ENCODE measurements at regions of chr2 and their contacts with region 1.

Region 1: GRCh38 chr2:157336137-157337010 is 10.8 kb upstream of the ERMN start:
- DNase-seq: peak in 10 of 14 experiments; percentile 12 to 76 (median 28)
- ATAC-seq: no peak
- H3K4me3 ChIP-seq: peak overlapping the region; percentile 6
- H3K4me3 Mint-ChIP-seq: peak overlapping the region; percentile 79
- H3K27ac ChIP-seq: no peak overlapping the region
- H3K27ac Mint-ChIP-seq: peak overlapping the region; percentile 83
- H3K4me1 ChIP-seq: peaks cover 30% of the 10 kb centered on the region
- H3K4me1 Mint-ChIP-seq: peaks cover 88% of the 10 kb centered on the region
- H3K27me3 ChIP-seq: no peaks in the 10 kb centered on the region
- H3K27me3 Mint-ChIP-seq: no peaks in the 10 kb centered on the region
- CTCF ChIP-seq: peak; percentile 82

Region 2: DNA sequence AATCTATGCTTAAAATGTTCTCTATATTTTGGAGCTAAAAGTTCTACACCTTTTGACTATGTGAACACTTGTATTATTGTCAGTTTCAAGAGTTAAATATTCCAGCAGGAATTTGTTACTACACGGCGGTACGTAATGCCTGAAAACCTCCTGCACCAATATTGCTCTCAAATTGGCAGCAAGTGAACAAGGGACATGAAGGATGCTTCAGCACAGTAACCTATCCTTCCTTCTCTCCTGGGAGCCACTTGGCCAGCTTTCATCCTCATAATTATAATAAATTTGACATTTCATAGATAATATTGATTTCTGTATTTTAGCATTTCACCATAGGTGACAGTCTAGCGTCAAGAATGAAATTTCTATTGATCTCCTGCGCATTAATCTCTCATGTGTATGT is 1201.5 kb before region 1 on chr2:
- CTCF ChIA-PET with region 1: no interaction called
- POLR2A ChIA-PET with region 1: no interaction called
- intact Hi-C with region 1: no loop called
- DNase-seq: no peak
- ATAC-seq: no peak
- H3K4me3 ChIP-seq: no peak overlapping the region
- H3K4me3 Mint-ChIP-seq: no peak overlapping the region
- H3K27ac ChIP-seq: no peak overlapping the region
- H3K27ac Mint-ChIP-seq: no peak overlapping the region
- H3K4me1 ChIP-seq: no peaks in the 10 kb centered on the region
- H3K4me1 Mint-ChIP-seq: no peaks in the 10 kb centered on the region
- H3K27me3 ChIP-seq: no peaks in the 10 kb centered on the region
- H3K27me3 Mint-ChIP-seq: peaks cover 5% of the 10 kb centered on the region
- CTCF ChIP-seq: no peak

Region 3: DNA sequence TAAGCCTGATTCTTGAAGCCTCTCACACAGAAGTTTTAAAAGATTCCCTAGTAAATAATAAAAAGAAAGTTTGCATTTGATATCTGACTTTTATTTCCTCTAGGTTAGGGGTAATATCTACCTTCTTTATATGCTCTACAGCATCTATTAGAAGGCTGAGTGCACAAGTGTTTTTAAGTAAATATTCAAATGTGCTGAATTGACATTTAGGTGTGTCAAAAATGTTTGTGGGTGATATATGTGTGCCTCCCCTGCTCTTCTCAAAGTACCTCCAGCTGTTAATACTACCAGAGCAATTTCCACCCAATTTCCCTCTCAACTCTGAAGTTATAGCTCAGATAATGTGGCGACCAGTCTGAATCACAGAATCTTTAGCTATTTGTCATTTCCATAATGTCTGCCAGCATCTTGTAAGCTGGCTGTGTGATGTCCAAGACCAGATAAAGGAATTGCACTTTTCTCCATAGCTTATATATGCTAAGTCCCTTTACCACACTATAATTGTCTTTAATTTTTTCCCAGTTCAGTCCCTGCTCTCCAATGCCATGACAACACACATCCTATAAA is 13.7 kb after region 1 on chr2:
- CTCF ChIA-PET with region 1: interaction called, 23 read pairs
- POLR2A ChIA-PET with region 1: interaction called, 8 read pairs
- intact Hi-C with region 1: no loop called
- DNase-seq: no peak
- ATAC-seq: no peak
- H3K4me3 ChIP-seq: no peak overlapping the region
- H3K4me3 Mint-ChIP-seq: no peak overlapping the region
- H3K27ac ChIP-seq: no peak overlapping the region
- H3K27ac Mint-ChIP-seq: no peak overlapping the region
- H3K4me1 ChIP-seq: no peaks in the 10 kb centered on the region
- H3K4me1 Mint-ChIP-seq: peaks cover 74% of the 10 kb centered on the region
- H3K27me3 ChIP-seq: no peaks in the 10 kb centered on the region
- H3K27me3 Mint-ChIP-seq: no peaks in the 10 kb centered on the region
- CTCF ChIP-seq: no peak

Region 4: DNA sequence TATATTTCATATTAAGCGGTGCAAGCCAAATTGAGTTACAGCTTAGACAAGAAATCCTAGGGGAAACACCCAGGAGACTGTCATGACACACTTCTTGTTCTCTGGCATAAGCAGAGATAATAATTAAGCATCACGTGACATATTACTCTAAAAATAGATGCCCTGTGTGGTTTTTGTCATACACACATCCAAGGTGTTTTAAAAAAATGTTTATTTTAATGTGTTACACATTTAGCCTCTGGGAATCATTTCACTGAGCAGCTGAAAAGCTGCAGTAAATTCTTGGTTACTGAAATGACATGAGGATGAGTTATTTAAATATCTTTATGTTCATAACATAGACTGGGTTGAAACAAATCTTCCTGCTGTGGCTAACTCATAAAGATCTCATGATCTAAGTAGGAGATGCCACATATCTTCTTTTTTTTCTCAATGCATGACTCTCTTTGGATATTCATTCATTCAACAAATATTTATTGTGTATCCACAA is 27.3 kb after region 1 on chr2:
- CTCF ChIA-PET with region 1: interaction called, 4 read pairs
- POLR2A ChIA-PET with region 1: interaction called, 3 read pairs
- intact Hi-C with region 1: loop called in 1 of 2 experiments (anchors 5 kb)
- DNase-seq: peak in 1 of 14 experiments; percentile 34
- ATAC-seq: no peak
- H3K4me3 ChIP-seq: no peak overlapping the region
- H3K4me3 Mint-ChIP-seq: no peak overlapping the region
- H3K27ac ChIP-seq: no peak overlapping the region
- H3K27ac Mint-ChIP-seq: no peak overlapping the region
- H3K4me1 ChIP-seq: peaks cover 3% of the 10 kb centered on the region
- H3K4me1 Mint-ChIP-seq: peaks cover 48% of the 10 kb centered on the region
- H3K27me3 ChIP-seq: no peaks in the 10 kb centered on the region
- H3K27me3 Mint-ChIP-seq: no peaks in the 10 kb centered on the region
- CTCF ChIP-seq: no peak

Region 5: GRCh38 chr2:157404363-157404762 is 68.0 kb after region 1 on chr2:
- CTCF ChIA-PET with region 1: no interaction called
- POLR2A ChIA-PET with region 1: interaction called, 92 read pairs
- intact Hi-C with region 1: no loop called
- DNase-seq: peak; percentile 53 to 93 (median 66)
- ATAC-seq: peak; percentile 91
- H3K4me3 ChIP-seq: no peak overlapping the region
- H3K4me3 Mint-ChIP-seq: peak overlapping the region; percentile 74
- H3K27ac ChIP-seq: peak overlapping the region; percentile 58 to 94
- H3K27ac Mint-ChIP-seq: peak overlapping the region; percentile 99
- H3K4me1 ChIP-seq: peaks cover 33% of the 10 kb centered on the region
- H3K4me1 Mint-ChIP-seq: peaks cover 82% of the 10 kb centered on the region
- H3K27me3 ChIP-seq: no peaks in the 10 kb centered on the region
- H3K27me3 Mint-ChIP-seq: no peaks in the 10 kb centered on the region
- CTCF ChIP-seq: no peak

Region 6: GRCh38 chr2:157413326-157414035 is 77.1 kb after region 1 on chr2:
- CTCF ChIA-PET with region 1: interaction called, 3 read pairs
- POLR2A ChIA-PET with region 1: interaction called, 23 read pairs
- intact Hi-C with region 1: no loop called
- DNase-seq: peak in 12 of 14 experiments; percentile 34 to 93 (median 54)
- ATAC-seq: peak; percentile 76
- H3K4me3 ChIP-seq: peak overlapping the region; percentile 6
- H3K4me3 Mint-ChIP-seq: peak overlapping the region; percentile 54
- H3K27ac ChIP-seq: peak overlapping the region; percentile 51 to 79
- H3K27ac Mint-ChIP-seq: peak overlapping the region; percentile 86
- H3K4me1 ChIP-seq: peaks cover 43% of the 10 kb centered on the region
- H3K4me1 Mint-ChIP-seq: peaks cover 92% of the 10 kb centered on the region
- H3K27me3 ChIP-seq: no peaks in the 10 kb centered on the region
- H3K27me3 Mint-ChIP-seq: no peaks in the 10 kb centered on the region
- CTCF ChIP-seq: no peak

Region 7: GRCh38 chr2:157420771-157421323 is 84.5 kb after region 1 on chr2:
- CTCF ChIA-PET with region 1: interaction called, 4 read pairs
- POLR2A ChIA-PET with region 1: interaction called, 19 read pairs
- intact Hi-C with region 1: no loop called
- DNase-seq: peak in 3 of 14 experiments; percentile 63 to 73 (median 70)
- ATAC-seq: peak; percentile 8
- H3K4me3 ChIP-seq: no peak overlapping the region
- H3K4me3 Mint-ChIP-seq: peak overlapping the region; percentile 72
- H3K27ac ChIP-seq: peak overlapping the region; percentile 69
- H3K27ac Mint-ChIP-seq: peak overlapping the region; percentile 96
- H3K4me1 ChIP-seq: peaks cover 49% of the 10 kb centered on the region
- H3K4me1 Mint-ChIP-seq: peaks cover 80% of the 10 kb centered on the region
- H3K27me3 ChIP-seq: no peaks in the 10 kb centered on the region
- H3K27me3 Mint-ChIP-seq: no peaks in the 10 kb centered on the region
- CTCF ChIP-seq: no peak

Region 8: DNA sequence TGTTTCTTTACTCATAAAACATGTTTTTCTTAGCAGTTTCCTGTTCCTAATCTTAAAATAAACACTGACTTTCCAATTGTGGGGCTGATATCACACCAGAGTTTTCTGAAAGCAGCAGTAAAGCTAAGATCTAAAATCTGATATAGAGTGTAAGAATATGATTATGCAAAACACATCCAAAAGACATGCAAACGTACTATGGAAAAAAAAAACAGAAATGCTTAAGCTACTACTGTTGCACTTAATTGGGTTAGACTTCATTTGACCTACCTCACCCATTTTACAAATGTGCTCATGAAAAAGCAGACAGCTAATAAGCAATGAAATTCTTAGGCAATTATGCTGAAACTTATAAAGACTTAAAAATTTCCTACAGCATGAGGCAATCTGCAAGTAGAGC is 97.0 kb after region 1 on chr2:
- CTCF ChIA-PET with region 1: interaction called, 3 read pairs
- POLR2A ChIA-PET with region 1: interaction called, 36 read pairs
- intact Hi-C with region 1: loop called in 1 of 2 experiments (anchors 10 kb)
- DNase-seq: no peak
- ATAC-seq: peak; percentile 25
- H3K4me3 ChIP-seq: peak overlapping the region; percentile 72
- H3K4me3 Mint-ChIP-seq: peak overlapping the region; percentile 95
- H3K27ac ChIP-seq: peak overlapping the region; percentile 13 to 97
- H3K27ac Mint-ChIP-seq: peak overlapping the region; percentile 97
- H3K4me1 ChIP-seq: peaks cover 33% of the 10 kb centered on the region
- H3K4me1 Mint-ChIP-seq: peaks cover 93% of the 10 kb centered on the region
- H3K27me3 ChIP-seq: no peaks in the 10 kb centered on the region
- H3K27me3 Mint-ChIP-seq: no peaks in the 10 kb centered on the region
- CTCF ChIP-seq: no peak

Region 9: GRCh38 chr2:157722580-157723234 is 386.3 kb after region 1 on chr2:
- CTCF ChIA-PET with region 1: no interaction called
- POLR2A ChIA-PET with region 1: no interaction called
- intact Hi-C with region 1: no loop called
- DNase-seq: peak in 1 of 14 experiments; percentile 3
- ATAC-seq: no peak
- H3K4me3 ChIP-seq: no peak overlapping the region
- H3K4me3 Mint-ChIP-seq: no peak overlapping the region
- H3K27ac ChIP-seq: no peak overlapping the region
- H3K27ac Mint-ChIP-seq: no peak overlapping the region
- H3K4me1 ChIP-seq: no peaks in the 10 kb centered on the region
- H3K4me1 Mint-ChIP-seq: no peaks in the 10 kb centered on the region
- H3K27me3 ChIP-seq: no peaks in the 10 kb centered on the region
- H3K27me3 Mint-ChIP-seq: no peaks in the 10 kb centered on the region
- CTCF ChIP-seq: no peak

Region 10: DNA sequence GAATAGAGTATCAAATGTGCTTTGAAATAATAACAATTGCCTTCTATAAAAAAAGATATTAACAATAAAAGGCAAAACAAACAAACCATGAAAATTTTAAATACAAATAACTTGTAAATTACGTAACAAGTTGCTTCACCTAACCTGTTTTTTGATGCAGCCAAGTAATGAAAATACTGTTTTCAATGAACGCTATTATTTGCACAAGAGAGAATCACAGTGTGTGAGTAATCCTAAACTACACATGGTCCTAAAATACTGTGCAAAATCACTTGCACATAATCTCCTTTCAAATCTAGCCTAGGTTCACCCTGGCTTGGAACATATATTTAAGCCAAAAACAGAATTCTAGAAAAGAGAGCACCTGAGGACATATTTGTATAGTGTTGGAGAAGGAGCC is 1021.3 kb after region 1 on chr2:
- CTCF ChIA-PET with region 1: no interaction called
- POLR2A ChIA-PET with region 1: no interaction called
- intact Hi-C with region 1: no loop called
- DNase-seq: no peak
- ATAC-seq: no peak
- H3K4me3 ChIP-seq: no peak overlapping the region
- H3K4me3 Mint-ChIP-seq: no peak overlapping the region
- H3K27ac ChIP-seq: no peak overlapping the region
- H3K27ac Mint-ChIP-seq: no peak overlapping the region
- H3K4me1 ChIP-seq: no peaks in the 10 kb centered on the region
- H3K4me1 Mint-ChIP-seq: no peaks in the 10 kb centered on the region
- H3K27me3 ChIP-seq: no peaks in the 10 kb centered on the region
- H3K27me3 Mint-ChIP-seq: no peaks in the 10 kb centered on the region
- CTCF ChIP-seq: no peak